Ascending aorta (tissue), 2 donors: ENCODE measurements at regions of chr9 and their contacts with region 1.

Region 1: DNA sequence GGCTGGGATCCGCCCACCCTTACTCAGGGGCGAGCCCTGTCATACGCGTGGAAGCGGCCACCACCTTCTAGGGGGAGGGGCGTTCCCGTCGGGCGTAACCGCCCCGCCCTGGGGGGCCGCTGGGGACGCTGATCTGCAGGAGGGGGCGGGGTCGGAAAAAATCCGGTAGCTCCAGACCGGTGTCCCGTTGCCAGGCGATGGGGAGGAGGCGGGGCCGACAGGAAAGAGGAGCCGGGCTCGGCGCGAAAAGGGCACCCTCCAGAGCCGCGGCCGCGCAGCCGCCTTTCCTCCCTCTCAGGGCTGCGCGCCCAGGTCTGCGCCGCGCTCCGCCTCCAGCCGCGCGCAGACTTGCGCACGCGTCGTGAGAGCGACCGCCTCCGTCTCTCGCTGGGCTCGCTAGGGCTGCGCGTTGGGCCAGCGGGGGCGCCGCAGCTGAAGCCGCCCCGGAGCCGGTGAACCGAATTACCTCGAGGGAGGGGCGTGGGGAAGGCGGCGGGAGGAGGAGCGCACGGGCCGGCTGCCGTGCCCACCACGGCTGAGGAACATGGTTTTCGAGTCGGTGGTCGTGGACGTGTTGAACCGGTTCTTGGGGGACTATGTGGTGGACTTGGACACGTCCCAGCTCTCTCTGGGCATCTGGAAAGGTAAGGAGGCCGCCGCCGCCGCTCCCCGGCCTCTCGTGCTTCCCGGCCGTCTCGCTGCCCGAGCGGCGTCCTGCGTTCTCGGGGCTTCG is at the start of gene VPS13A:
- DNase-seq: peak; percentile 78 to 97
- H3K4me3 ChIP-seq: peak within 1 kb of the TSS; percentile 64 to 90
- H3K27ac ChIP-seq: peak within 1 kb of the TSS; percentile 78 to 90
- H3K4me1 ChIP-seq: peaks cover 0 to 15% of the 10 kb centered on the region in 2 donors
- H3K27me3 ChIP-seq: no peaks in the 10 kb centered on the region
- CTCF ChIP-seq: peak in 1 of 3 experiments; percentile 46
- total RNA-seq, gene VPS13A: 18.8 TPM

Region 2: DNA sequence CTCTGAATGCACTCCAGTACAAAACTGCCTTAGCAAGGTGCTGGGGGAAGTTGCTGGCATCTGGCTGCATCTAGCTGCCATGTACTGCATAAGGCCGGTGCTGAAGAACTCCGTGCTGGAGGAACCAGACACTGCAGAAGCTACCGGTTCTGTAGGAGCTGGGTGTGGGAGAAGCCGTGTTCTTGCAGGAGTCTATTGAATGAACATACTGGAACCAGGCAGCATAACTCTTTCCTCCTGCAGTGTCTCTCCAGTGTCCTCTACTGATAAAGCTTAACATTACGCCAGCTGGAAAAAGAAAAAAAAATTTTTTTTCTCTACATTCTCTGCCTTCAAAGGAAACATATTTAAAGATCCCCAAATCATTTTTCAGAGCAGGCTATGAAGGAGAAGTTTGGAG is 38.5 kb after region 1 on chr9:
- intact Hi-C with region 1: loop called (anchors 2 kb)
- DNase-seq: no peak
- H3K4me3 ChIP-seq: no peak overlapping the region
- H3K27ac ChIP-seq: no peak overlapping the region
- H3K4me1 ChIP-seq: peaks cover 0 to 3% of the 10 kb centered on the region in 2 donors
- H3K27me3 ChIP-seq: no peaks in the 10 kb centered on the region
- CTCF ChIP-seq: no peak

Region 3: GRCh38 chr9:77251050-77251449 is 73.7 kb after region 1 on chr9:
- intact Hi-C with region 1: no loop called
- DNase-seq: no peak
- H3K4me3 ChIP-seq: no peak overlapping the region
- H3K27ac ChIP-seq: no peak overlapping the region
- H3K4me1 ChIP-seq: no peaks in the 10 kb centered on the region
- H3K27me3 ChIP-seq: no peaks in the 10 kb centered on the region
- CTCF ChIP-seq: no peak

Region 4: DNA sequence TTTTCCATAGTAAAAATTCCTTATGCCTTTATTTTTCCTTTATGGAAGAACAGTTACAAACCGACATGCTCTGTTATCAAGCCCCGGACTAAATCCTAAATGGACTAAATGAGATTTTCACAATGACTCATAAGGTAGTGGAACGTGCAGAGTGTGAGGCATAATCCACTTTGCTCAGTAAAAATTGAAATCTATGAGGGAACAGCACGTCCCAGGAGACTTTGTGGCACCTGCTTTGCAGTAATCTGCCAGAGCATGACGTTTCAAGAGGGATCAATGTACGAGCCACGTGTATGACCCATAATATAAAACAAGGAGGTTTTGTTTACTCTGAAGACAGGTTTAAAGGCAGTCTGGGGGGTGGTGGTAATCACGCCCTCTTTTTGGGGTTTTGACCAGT is 554.6 kb after region 1 on chr9:
- intact Hi-C with region 1: loop called (anchors 10 kb)
- DNase-seq: no peak
- H3K4me3 ChIP-seq: no peak overlapping the region
- H3K27ac ChIP-seq: peak overlapping the region in 1 of 2 donors; percentile 13
- H3K4me1 ChIP-seq: peaks cover 0 to 6% of the 10 kb centered on the region in 2 donors
- H3K27me3 ChIP-seq: no peaks in the 10 kb centered on the region
- CTCF ChIP-seq: no peak

Region 5: DNA sequence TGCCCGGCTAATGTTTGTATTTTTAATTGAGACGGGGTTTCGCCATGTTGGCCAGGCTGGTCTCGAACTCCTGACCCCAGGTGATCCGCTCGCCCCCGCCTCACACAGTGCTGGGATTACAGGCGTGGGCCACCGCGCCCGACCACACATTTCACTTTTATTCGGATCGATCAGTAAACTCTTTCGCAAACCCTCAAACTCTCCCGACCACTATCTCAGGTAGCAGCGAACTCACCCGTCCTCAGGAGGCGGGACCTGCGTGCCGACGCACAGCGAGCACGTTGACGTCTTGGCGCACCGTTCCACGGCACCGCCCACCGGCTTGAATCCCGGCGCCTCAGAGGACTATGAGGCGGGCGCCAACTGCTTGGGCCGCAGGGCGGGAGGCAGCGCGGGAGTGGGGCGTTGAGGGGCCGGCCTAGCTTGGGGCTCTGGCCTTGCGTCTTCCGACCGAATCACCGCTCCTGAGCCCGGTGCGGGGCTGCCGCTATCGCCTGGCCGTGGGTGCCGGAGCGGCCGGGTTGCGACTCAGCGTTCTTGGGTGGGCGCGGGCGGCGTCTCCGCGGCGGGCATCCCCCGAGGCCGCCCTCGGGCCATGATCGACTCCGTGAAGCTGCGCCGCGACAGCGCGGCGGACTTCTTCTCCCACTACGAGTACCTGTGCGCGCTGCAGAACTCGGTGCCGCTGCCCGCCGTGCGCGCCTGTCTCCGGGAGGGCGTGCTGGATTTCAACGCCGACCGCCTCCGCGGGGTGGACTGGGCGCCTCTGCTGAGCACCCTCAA is 1058.6 kb after region 1 on chr9 and contains the start of gene CEP78:
- intact Hi-C with region 1: loop called (anchors 10 kb)
- DNase-seq: peak; percentile 63 to 93
- H3K4me3 ChIP-seq: peak within 1 kb of the TSS; percentile 89 to 93
- H3K27ac ChIP-seq: peak within 1 kb of the TSS; percentile 69 to 80
- H3K4me1 ChIP-seq: no peaks in the 10 kb centered on the region
- H3K27me3 ChIP-seq: no peaks in the 10 kb centered on the region
- CTCF ChIP-seq: no peak
- total RNA-seq, gene CEP78: 19.8 TPM